MCF 10A (cell line): ENCODE measurements at regions of chr17 and their contacts with region 1.

Region 1: GRCh38 chr17:43393944-43394482 is 4.8 kb upstream of the ARL4D start:
- DNase-seq: peak; percentile 92
- H3K4me3 Mint-ChIP-seq: no peak overlapping the region
- H3K27ac Mint-ChIP-seq: no peak overlapping the region
- H3K4me1 Mint-ChIP-seq: peaks cover 19% of the 10 kb centered on the region
- H3K27me3 Mint-ChIP-seq: no peaks in the 10 kb centered on the region
- CTCF ChIP-seq: peak; percentile 79

Region 2: DNA sequence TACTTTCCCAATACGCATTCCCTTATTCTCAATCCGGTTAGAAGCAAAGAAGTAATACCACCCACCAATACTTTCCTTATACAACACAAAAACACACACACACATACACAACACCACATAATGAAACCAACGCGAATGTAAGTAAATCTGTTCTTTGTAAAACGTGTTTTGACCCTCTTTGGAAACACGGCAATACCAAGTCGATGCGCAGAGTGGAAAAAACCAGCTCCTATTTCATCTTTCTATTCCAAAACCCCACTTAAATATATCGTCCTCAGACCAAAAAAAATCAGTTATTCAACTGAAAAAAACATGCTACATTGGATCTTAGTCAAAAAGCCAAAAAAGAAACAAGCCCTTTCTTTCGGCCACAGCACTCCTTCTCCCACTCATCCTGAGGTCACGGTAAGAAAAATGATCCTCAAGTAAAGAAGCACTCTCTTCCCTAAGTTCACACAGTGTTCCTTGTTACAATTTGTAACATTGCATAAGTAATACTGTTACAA is 26.2 kb before region 1 on chr17:
- CTCF ChIA-PET with region 1: interaction called, 10 read pairs
- POLR2A ChIA-PET with region 1: interaction called, 350 read pairs
- intact Hi-C with region 1: no loop called
- DNase-seq: peak; percentile 90
- H3K4me3 Mint-ChIP-seq: peak overlapping the region; percentile 73
- H3K27ac Mint-ChIP-seq: peak overlapping the region; percentile 100
- H3K4me1 Mint-ChIP-seq: peaks cover 16% of the 10 kb centered on the region
- H3K27me3 Mint-ChIP-seq: no peaks in the 10 kb centered on the region
- CTCF ChIP-seq: no peak

Region 3: DNA sequence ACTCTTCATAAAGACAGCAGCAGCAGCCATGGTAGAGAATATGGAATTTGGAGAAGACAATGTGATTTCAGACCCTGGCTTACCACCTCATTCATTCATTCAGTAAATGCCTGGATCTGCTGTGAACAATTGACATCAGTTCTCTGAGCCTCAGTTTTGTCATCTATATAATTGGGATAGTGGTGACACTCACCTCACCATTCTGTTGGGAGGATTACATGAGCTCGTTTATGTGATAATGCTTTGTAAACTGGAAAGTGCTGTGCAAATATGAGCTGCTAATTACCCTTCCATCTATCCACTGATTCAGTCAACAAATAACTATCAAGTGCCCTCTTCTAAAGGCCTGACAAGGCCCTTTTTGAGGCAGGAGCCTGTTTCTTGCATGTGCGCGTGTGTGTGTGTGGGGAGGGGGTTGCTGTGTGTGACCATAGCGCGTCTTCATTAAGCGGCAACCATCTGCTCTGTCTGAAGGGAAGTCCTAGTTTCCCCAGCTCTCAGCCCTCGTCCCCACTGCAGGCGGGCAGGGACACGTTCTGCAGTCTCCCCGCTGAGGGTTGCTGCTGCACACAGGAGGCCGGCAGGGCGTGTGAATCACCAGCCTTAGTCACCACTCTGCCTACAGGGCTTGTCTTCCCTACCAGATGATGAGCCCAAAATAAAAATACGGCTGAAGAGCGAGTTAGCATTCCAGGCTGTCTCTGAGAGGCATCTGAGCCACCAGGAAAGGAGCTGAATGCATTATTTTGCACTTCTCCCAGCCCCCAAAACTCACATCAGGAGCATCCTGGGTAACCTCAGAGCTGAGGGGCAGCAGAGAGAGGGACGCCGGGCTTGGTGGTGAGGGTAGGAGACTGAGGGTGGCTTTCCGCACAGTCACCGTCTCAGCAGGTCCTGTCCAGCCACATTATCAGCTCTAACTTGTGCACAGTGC is 24.7 kb after region 1 on chr17:
- CTCF ChIA-PET with region 1: interaction called, 25 read pairs
- POLR2A ChIA-PET with region 1: interaction called, 654 read pairs
- intact Hi-C with region 1: no loop called
- DNase-seq: peak; percentile 94
- H3K4me3 Mint-ChIP-seq: peak overlapping the region; percentile 59
- H3K27ac Mint-ChIP-seq: peak overlapping the region; percentile 76
- H3K4me1 Mint-ChIP-seq: peaks cover 41% of the 10 kb centered on the region
- H3K27me3 Mint-ChIP-seq: no peaks in the 10 kb centered on the region
- CTCF ChIP-seq: no peak

Region 4: DNA sequence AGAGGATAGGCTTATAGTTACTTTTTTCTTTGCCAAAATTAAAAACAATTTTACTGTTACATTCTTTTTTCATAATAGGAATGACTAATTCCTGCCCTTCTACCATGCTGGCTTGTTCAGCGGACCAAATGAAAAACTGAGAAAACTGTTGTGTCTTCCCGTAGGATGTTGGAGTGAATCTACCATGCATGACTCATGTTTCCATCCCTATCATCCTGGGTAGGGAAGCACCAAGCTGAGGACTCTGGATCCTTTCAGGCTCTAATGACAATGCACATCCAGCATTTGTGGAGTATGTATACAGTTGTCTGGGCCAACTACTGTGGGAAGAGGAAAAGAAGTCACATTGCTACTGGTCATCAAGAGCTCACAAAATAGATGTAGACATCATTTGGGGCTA is 48.7 kb after region 1 on chr17:
- CTCF ChIA-PET with region 1: interaction called, 4 read pairs
- POLR2A ChIA-PET with region 1: interaction called, 134 read pairs
- intact Hi-C with region 1: no loop called
- DNase-seq: peak; percentile 66
- H3K4me3 Mint-ChIP-seq: no peak overlapping the region
- H3K27ac Mint-ChIP-seq: no peak overlapping the region
- H3K4me1 Mint-ChIP-seq: peaks cover 22% of the 10 kb centered on the region
- H3K27me3 Mint-ChIP-seq: no peaks in the 10 kb centered on the region
- CTCF ChIP-seq: no peak

Region 5: DNA sequence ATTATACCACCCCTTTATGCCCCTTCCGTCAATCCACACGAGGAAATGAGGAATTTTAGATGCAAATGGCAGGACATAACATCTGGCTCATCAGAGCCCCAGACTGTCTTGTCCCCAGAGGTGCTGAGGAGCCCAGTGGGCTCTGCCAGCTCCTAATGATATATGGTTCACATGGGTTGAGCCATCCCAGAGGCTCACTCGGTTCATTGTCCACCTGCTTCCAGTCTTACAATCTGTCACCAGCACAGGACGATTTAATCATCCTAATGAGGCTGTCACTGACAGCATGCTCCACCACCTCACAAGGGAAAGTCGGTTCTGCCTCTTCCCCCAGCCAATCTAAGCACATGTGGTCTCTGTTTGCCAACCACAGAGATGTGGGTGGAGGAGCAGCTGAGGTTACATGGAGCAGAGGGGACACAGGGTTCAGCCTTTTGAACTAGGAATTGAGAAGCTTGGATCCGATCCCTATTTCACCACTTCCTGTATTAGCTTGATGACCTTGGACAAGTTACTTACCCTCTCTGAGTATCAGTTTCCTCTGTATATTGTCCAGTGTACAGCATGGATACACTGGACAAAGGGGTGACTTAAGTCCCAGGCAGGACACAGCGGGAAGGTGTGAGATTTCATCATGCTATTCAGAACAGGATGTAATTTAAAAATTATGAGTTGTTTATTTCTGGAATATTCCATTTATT is 62.8 kb after region 1 on chr17:
- CTCF ChIA-PET with region 1: interaction called, 10 read pairs
- POLR2A ChIA-PET with region 1: interaction called, 640 read pairs
- intact Hi-C with region 1: no loop called
- DNase-seq: peak; percentile 91
- H3K4me3 Mint-ChIP-seq: no peak overlapping the region
- H3K27ac Mint-ChIP-seq: peak overlapping the region; percentile 63
- H3K4me1 Mint-ChIP-seq: peaks cover 21% of the 10 kb centered on the region
- H3K27me3 Mint-ChIP-seq: no peaks in the 10 kb centered on the region
- CTCF ChIP-seq: no peak

Region 6: GRCh38 chr17:43477832-43478634 is 84.0 kb after region 1 on chr17:
- CTCF ChIA-PET with region 1: interaction called, 374 read pairs
- POLR2A ChIA-PET with region 1: interaction called, 389 read pairs
- intact Hi-C with region 1: loop called (anchors 1 kb)
- DNase-seq: no peak
- H3K4me3 Mint-ChIP-seq: no peak overlapping the region
- H3K27ac Mint-ChIP-seq: no peak overlapping the region
- H3K4me1 Mint-ChIP-seq: no peaks in the 10 kb centered on the region
- H3K27me3 Mint-ChIP-seq: no peaks in the 10 kb centered on the region
- CTCF ChIP-seq: no peak

Region 7: GRCh38 chr17:43536236-43536992 is 142.4 kb after region 1 on chr17:
- CTCF ChIA-PET with region 1: no interaction called
- POLR2A ChIA-PET with region 1: no interaction called
- intact Hi-C with region 1: no loop called
- DNase-seq: peak; percentile 65
- H3K4me3 Mint-ChIP-seq: peak overlapping the region; percentile 8
- H3K27ac Mint-ChIP-seq: peak overlapping the region; percentile 52
- H3K4me1 Mint-ChIP-seq: peaks cover 15% of the 10 kb centered on the region
- H3K27me3 Mint-ChIP-seq: no peaks in the 10 kb centered on the region
- CTCF ChIP-seq: no peak

Region 8: GRCh38 chr17:43576563-43577229 is 182.7 kb after region 1 on chr17:
- CTCF ChIA-PET with region 1: no interaction called
- POLR2A ChIA-PET with region 1: no interaction called
- intact Hi-C with region 1: loop called (anchors 10 kb)
- DNase-seq: peak; percentile 75
- H3K4me3 Mint-ChIP-seq: no peak overlapping the region
- H3K27ac Mint-ChIP-seq: no peak overlapping the region
- H3K4me1 Mint-ChIP-seq: peaks cover 17% of the 10 kb centered on the region
- H3K27me3 Mint-ChIP-seq: no peaks in the 10 kb centered on the region
- CTCF ChIP-seq: peak; percentile 96